ENCODE measurements at regions of chr5 and their contacts with region 1.

Region 1: GRCh38 chr5:15354021-15354420 is 146.0 kb upstream of the FBXL7 start:
- DNase-seq: no peak
- H3K4me3 ChIP-seq: no peak overlapping the region
- H3K27ac ChIP-seq: no peak overlapping the region
- H3K4me1 ChIP-seq: no peaks in the 10 kb centered on the region
- H3K27me3 ChIP-seq: no peaks in the 10 kb centered on the region
- CTCF ChIP-seq: no peak
- EP300 ChIP-seq: no peak
- POLR2A ChIP-seq: no peak

Region 2: GRCh38 chr5:15386122-15386521 is 32.1 kb after region 1 on chr5:
- intact Hi-C with region 1: loop called in 1 of 4 experiments (anchors 1 kb)
- DNase-seq: no peak
- H3K4me3 ChIP-seq: no peak overlapping the region
- H3K27ac ChIP-seq: no peak overlapping the region
- H3K4me1 ChIP-seq: peaks cover 2% of the 10 kb centered on the region
- H3K27me3 ChIP-seq: no peaks in the 10 kb centered on the region
- CTCF ChIP-seq: no peak
- EP300 ChIP-seq: no peak
- POLR2A ChIP-seq: no peak

Measured in ovary (tissue), 10 donors.